GM12878 (cell line): ENCODE measurements at regions of chr16 and their contacts with region 1.

Region 1: GRCh38 chr16:68328151-68328859 is 17.5 kb downstream of the PRMT7 start:
- DNase-seq: peak; percentile 57
- ATAC-seq: peak; percentile 98
- H3K4me3 ChIP-seq: no peak overlapping the region
- H3K27ac ChIP-seq: no peak overlapping the region
- H3K4me1 ChIP-seq: peaks cover 22% of the 10 kb centered on the region
- H3K27me3 ChIP-seq: no peaks in the 10 kb centered on the region
- CTCF ChIP-seq: peak; percentile 92 to 99 (median 98); a peak in 5 of 6 replicates
- EP300 ChIP-seq: no peak
- POLR2A ChIP-seq: no peak
- RAD21 ChIP-seq: peak; percentile 98

Region 2: GRCh38 chr16:68244903-68245853 is 83.1 kb before region 1 on chr16 and contains the start of gene PLA2G15:
- CTCF ChIA-PET with region 1: interaction called, 64 read pairs
- POLR2A ChIA-PET with region 1: interaction called, 7 read pairs
- RAD21 ChIA-PET with region 1: interaction called, 12 read pairs
- SMC1A ChIA-PET with region 1: interaction called, 13 read pairs
- in situ Hi-C with region 1: no loop called
- intact Hi-C with region 1: no loop called
- DNase-seq: no peak
- ATAC-seq: peak; percentile 98
- H3K4me3 ChIP-seq: peak within 1 kb of the TSS; percentile 97
- H3K27ac ChIP-seq: peak within 1 kb of the TSS; percentile 5; the same call in 1 of the 2 replicates
- H3K4me1 ChIP-seq: peaks cover 18% of the 10 kb centered on the region
- H3K27me3 ChIP-seq: no peaks in the 10 kb centered on the region
- CTCF ChIP-seq: no peak
- EP300 ChIP-seq: 0 out of 4 replicates have a peak, but pooled peaks of 1 of the 2 experiments have one; percentile 22
- POLR2A ChIP-seq: peak; percentile 87
- RAD21 ChIP-seq: no peak
- polyA plus RNA-seq, gene PLA2G15: 0.31 to 1.1 TPM

Region 3: DNA sequence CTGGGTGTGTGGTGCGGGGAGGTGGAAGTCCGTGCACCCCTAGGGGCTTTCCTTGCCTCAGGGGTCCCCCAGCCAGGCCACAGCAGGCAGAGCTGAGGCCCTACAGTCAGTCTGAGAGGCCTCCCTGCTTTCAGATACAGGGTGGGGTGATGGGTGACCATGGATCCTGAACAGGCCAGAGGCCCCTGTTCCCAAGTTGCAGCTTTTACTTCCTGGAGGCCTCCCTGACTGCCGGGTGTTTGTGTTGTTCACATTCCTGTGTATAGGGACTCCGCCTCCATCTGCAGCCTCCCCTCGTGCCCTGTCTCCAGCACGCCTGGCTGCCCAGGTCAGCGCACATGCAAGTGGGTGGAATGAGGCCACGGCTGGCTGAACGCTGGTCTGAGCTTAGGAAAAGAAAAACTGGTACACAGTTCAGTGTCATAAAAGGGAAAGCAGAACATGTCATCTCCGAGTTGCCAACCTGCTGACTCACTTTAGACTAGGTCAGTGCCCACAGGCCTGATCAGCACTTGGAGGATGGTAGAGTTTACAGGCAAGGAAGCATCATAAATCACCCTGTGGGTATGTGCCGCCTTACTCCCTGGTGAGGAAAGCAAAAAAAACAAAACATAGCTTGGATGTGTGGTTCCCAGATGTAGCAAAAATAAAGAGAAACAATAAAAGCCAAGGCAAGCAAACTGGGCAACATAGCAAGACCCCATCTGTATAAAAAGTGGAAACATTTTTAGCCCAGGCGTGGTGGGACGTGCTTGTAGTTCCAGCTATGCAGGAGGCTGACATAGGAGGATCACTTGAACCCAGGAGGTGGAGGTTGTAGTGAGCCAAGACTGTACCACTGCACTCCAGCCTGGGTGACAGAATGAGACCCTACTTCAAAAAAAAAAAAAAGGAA is 70.2 kb before region 1 on chr16:
- CTCF ChIA-PET with region 1: interaction called, 747 read pairs
- POLR2A ChIA-PET with region 1: interaction called, 58 read pairs
- RAD21 ChIA-PET with region 1: interaction called, 399 read pairs
- SMC1A ChIA-PET with region 1: interaction called, 198 read pairs
- in situ Hi-C with region 1: loop called (anchors 5 kb)
- intact Hi-C with region 1: loop called (anchors 1 kb)
- DNase-seq: no peak
- ATAC-seq: peak; percentile 66
- H3K4me3 ChIP-seq: no peak overlapping the region
- H3K27ac ChIP-seq: peak overlapping the region; percentile 35
- H3K4me1 ChIP-seq: peaks cover 22% of the 10 kb centered on the region
- H3K27me3 ChIP-seq: no peaks in the 10 kb centered on the region
- CTCF ChIP-seq: no peak
- EP300 ChIP-seq: no peak
- POLR2A ChIP-seq: no peak
- RAD21 ChIP-seq: no peak

Region 4: GRCh38 chr16:68289621-68290329 is 38.5 kb before region 1 on chr16:
- CTCF ChIA-PET with region 1: interaction called, 29 read pairs
- POLR2A ChIA-PET with region 1: interaction called, 8 read pairs
- RAD21 ChIA-PET with region 1: interaction called, 10 read pairs
- SMC1A ChIA-PET with region 1: interaction called, 34 read pairs
- in situ Hi-C with region 1: no loop called
- intact Hi-C with region 1: no loop called
- DNase-seq: peak; percentile 77
- ATAC-seq: peak; percentile 95
- H3K4me3 ChIP-seq: peak overlapping the region; percentile 29; the same call in 1 of the 2 replicates
- H3K27ac ChIP-seq: peak overlapping the region; percentile 92
- H3K4me1 ChIP-seq: peaks cover 57% of the 10 kb centered on the region
- H3K27me3 ChIP-seq: no peaks in the 10 kb centered on the region
- CTCF ChIP-seq: no peak
- EP300 ChIP-seq: 0 out of 4 replicates have a peak, but pooled peaks of 1 of the 2 experiments have one; percentile 11
- POLR2A ChIP-seq: 0 out of 2 replicates have a peak, but pooled peaks have one; percentile 37
- RAD21 ChIP-seq: no peak

Region 5: GRCh38 chr16:68310761-68311511 is 17.4 kb before region 1 on chr16 and contains the starts of genes PRMT7 and SLC7A6OS:
- CTCF ChIA-PET with region 1: interaction called, 9 read pairs
- POLR2A ChIA-PET with region 1: interaction called, 4 read pairs
- RAD21 ChIA-PET with region 1: interaction called, 11 read pairs
- SMC1A ChIA-PET with region 1: interaction called, 8 read pairs
- in situ Hi-C with region 1: no loop called
- intact Hi-C with region 1: no loop called
- DNase-seq: peak; percentile 65
- ATAC-seq: peak; percentile 99
- H3K4me3 ChIP-seq: peak within 1 kb of the TSS; percentile 95
- H3K27ac ChIP-seq: peak within 1 kb of the TSS; percentile 79
- H3K4me1 ChIP-seq: 0 out of 2 replicates have a peak, but pooled peaks cover 3% of the 10 kb centered on the region
- H3K27me3 ChIP-seq: no peaks in the 10 kb centered on the region
- CTCF ChIP-seq: no peak
- EP300 ChIP-seq: peak in 1 of 2 experiments; percentile 27; a peak in 1 of 4 replicates
- POLR2A ChIP-seq: peak; percentile 98
- RAD21 ChIP-seq: 0 out of 2 replicates have a peak, but pooled peaks have one; percentile 8
- polyA plus RNA-seq, gene PRMT7: 5.1 to 5.6 TPM
- polyA plus RNA-seq, gene SLC7A6OS: 2.9 to 6.4 TPM

Region 6: DNA sequence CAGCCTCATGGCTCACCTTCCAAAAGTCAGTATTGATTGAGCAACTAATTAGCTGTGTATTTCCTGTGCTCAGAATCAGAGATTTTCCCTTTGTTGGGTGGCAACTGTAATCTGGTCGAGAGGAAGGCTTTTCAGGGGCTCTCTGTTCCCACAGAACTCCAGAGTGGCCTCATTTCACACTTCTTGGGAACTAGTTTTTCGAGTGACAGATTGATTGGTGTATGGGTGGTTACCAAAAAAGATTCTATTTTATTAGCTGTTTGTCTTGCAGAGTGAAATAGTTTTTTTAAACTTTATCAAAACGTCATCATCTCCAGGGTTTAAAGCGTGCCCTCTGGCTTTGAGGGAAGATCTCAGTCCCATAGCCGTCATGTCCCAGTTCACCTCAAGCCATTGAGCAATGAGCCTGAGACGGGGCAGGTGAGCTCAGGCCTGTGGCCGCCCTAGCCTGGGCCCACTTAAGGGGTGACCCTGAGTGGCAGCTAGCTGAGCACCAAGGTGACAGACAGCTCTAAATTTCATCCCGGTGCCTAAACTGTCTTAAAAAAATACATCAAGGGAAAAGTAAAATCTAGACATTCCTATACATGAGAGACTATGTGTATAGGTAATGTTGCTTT is 67.0 kb after region 1 on chr16:
- CTCF ChIA-PET with region 1: no interaction called
- POLR2A ChIA-PET with region 1: no interaction called
- RAD21 ChIA-PET with region 1: no interaction called
- SMC1A ChIA-PET with region 1: no interaction called
- in situ Hi-C with region 1: no loop called
- intact Hi-C with region 1: no loop called
- DNase-seq: no peak
- ATAC-seq: no peak
- H3K4me3 ChIP-seq: no peak overlapping the region
- H3K27ac ChIP-seq: no peak overlapping the region
- H3K4me1 ChIP-seq: no peaks in the 10 kb centered on the region
- H3K27me3 ChIP-seq: no peaks in the 10 kb centered on the region
- CTCF ChIP-seq: no peak
- EP300 ChIP-seq: no peak
- POLR2A ChIP-seq: no peak
- RAD21 ChIP-seq: no peak

Region 7: DNA sequence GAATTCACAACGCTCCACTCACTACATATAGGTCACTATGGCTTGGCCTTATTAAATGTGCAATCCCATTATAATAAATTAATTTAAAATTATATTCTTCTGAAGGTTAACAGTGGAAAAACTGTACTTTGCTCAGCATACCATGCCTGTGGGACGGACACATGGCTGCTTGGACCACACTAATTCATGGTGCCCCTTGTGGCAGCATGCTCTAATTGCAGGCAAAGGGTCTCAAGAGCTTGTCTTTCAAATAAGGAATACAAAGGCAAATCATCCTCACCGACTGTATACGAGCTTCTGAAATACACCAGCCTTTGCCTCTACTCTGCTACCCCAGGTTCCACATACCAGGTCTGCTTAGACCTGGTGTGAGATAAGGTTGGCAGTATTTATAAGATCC is 108.3 kb after region 1 on chr16:
- CTCF ChIA-PET with region 1: no interaction called
- POLR2A ChIA-PET with region 1: no interaction called
- RAD21 ChIA-PET with region 1: no interaction called
- SMC1A ChIA-PET with region 1: no interaction called
- in situ Hi-C with region 1: no loop called
- intact Hi-C with region 1: no loop called
- DNase-seq: no peak
- ATAC-seq: no peak
- H3K4me3 ChIP-seq: no peak overlapping the region
- H3K27ac ChIP-seq: no peak overlapping the region
- H3K4me1 ChIP-seq: no peaks in the 10 kb centered on the region
- H3K27me3 ChIP-seq: no peaks in the 10 kb centered on the region
- CTCF ChIP-seq: peak in 2 of 3 experiments; percentile 25 to 46; a peak in 2 of 6 replicates
- EP300 ChIP-seq: no peak
- POLR2A ChIP-seq: no peak
- RAD21 ChIP-seq: no peak